ENCODE measurements at regions of chr4 and their contacts with region 1.

Region 1: DNA sequence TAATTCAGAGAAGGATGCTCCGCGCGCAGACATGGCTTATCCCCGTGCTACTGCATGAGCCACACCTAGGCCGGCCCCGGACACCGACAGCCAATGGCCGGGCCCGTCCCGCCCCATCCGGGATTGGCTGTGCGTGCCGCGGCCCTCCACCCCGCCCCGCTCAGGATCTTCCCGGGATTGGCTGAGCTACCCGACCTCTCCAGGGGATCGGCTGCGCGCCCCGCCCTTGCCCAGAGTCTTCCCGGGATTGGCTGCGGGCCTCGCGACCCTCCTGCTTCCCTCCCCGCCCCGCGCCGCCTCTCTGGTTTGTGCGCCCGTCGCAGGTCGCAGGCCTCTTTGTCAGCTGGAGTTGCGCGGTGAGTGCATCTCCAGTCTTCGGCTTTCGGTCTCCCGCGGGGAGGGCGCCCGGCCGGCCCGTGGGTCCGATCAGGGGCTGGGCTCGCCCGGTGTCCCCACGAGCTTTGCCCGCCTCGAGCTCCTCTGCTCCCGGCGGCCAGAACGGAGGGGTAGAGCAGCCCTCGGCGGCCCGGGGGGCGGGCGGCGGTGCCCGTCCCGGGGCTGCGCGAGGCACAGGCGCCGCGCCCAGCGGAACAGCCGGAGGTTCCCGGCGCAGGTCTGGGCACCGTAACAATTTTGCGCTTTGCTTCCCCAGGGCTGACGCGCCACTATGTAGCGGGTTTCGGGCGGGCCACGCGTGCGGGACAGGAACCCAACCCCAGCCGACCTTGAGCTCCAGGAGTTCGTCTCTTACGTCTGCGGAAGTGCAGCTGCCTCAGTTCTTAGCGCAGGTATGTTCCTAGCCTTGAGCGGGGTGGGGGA is 38.8 kb downstream of the ERVMER34-1 start:
- DNase-seq: peak; percentile 98
- H3K4me3 Mint-ChIP-seq: peak overlapping the region; percentile 95
- H3K27ac Mint-ChIP-seq: peak overlapping the region; percentile 97
- H3K4me1 Mint-ChIP-seq: peaks cover 48% of the 10 kb centered on the region
- H3K27me3 Mint-ChIP-seq: no peaks in the 10 kb centered on the region

Region 2: GRCh38 chr4:51842554-51843308 is 869.6 kb before region 1 on chr4 and contains the start of gene DCUN1D4:
- CTCF ChIA-PET with region 1: no interaction called
- POLR2A ChIA-PET with region 1: interaction called, 3 read pairs
- intact Hi-C with region 1: loop called (anchors 1 kb)
- DNase-seq: peak; percentile 99
- H3K4me3 Mint-ChIP-seq: peak within 1 kb of the TSS; percentile 89
- H3K27ac Mint-ChIP-seq: peak within 1 kb of the TSS; percentile 89
- H3K4me1 Mint-ChIP-seq: peaks cover 18% of the 10 kb centered on the region
- H3K27me3 Mint-ChIP-seq: no peaks in the 10 kb centered on the region
- total RNA-seq, gene DCUN1D4: 23.5 to 25.1 TPM

Region 3: DNA sequence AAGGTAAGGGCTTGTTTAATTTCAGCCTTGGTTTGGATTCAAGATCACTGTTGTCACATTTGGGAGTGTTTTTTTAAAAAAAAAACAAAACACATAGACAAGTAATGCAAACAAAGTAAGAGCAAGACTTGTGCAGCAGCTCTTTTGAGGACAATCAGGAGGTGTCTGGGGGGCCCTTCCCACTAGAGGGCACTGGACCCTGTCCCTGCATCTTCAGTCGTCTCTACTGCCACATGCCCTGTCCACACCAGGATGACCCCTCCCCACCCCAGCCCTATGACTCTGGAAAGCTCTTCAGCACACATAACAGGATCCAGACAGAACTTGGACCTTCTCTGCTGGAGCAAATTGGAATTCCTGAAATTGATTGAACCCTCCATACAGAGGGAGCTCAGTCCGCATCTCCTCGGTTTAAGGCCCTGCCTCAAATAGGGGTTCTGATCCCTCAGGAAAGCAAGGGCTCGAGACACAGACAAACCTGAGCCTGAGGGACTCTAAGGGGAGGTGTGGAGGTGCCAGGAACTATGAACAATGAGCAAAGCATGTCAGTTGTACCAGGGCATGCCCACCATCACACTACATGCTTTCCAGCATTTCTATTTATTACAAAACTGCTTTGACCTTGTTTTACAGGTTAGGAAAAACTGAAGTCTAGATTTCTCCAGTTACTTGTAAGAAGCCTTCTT is 124.1 kb before region 1 on chr4:
- CTCF ChIA-PET with region 1: interaction called, 18 read pairs
- POLR2A ChIA-PET with region 1: interaction called, 5 read pairs
- intact Hi-C with region 1: loop called (anchors 2 kb)
- DNase-seq: peak; percentile 51
- H3K4me3 Mint-ChIP-seq: no peak overlapping the region
- H3K27ac Mint-ChIP-seq: peak overlapping the region; percentile 44
- H3K4me1 Mint-ChIP-seq: peaks cover 31% of the 10 kb centered on the region
- H3K27me3 Mint-ChIP-seq: no peaks in the 10 kb centered on the region

Region 4: DNA sequence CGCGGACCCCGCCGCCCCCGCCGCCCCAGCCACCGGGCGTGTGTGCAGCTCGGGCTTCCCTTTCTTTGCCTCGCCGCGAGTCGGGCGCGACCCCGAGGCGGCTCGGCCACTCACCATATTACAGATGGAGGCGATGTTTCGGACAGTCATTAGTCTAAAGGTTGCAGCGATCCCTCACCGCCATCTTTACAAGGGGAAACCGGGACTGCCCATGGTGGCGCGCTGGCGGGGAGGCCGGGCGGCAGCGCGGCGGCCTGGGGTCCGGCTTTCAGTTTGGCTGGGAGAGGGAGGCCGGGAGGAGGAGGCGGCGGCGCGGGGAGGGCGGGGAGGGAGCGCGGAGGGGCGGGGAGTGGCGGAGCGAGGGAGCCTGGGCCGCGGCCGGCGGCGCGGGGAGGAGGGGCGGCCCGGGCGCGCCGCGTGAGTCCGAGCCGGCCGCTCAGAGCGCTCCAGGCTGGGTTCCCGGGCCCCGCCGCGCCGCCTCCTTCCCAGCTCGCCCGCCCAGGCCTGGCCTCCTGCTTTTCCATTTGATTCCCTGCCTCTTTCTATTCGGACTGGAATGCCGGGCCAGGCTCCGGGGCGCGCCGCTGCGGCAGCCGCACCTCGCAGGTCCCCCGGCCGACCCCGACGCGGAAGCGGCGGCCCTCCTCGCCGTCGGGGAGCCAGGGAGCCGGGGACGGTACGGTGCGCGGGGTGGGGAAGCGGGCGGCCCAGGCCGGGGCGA is 53.2 kb before region 1 on chr4 and contains the start of gene USP46:
- CTCF ChIA-PET with region 1: interaction called, 7 read pairs
- POLR2A ChIA-PET with region 1: interaction called, 19 read pairs
- intact Hi-C with region 1: loop called (anchors 1 kb)
- DNase-seq: peak; percentile 68
- H3K4me3 Mint-ChIP-seq: peak within 1 kb of the TSS; percentile 84
- H3K27ac Mint-ChIP-seq: peak within 1 kb of the TSS; percentile 79
- H3K4me1 Mint-ChIP-seq: peaks cover 40% of the 10 kb centered on the region
- H3K27me3 Mint-ChIP-seq: peaks cover 2% of the 10 kb centered on the region
- total RNA-seq, gene USP46: 6.2 to 7.0 TPM

Region 5: GRCh38 chr4:52861879-52862616 is 149.7 kb after region 1 on chr4 and contains the start of gene RASL11B:
- CTCF ChIA-PET with region 1: no interaction called
- POLR2A ChIA-PET with region 1: no interaction called
- intact Hi-C with region 1: loop called (anchors 5 kb)
- DNase-seq: peak; percentile 88
- H3K4me3 Mint-ChIP-seq: peak within 1 kb of the TSS; percentile 64
- H3K27ac Mint-ChIP-seq: no peak within 1 kb of the TSS
- H3K4me1 Mint-ChIP-seq: peaks cover 5% of the 10 kb centered on the region
- H3K27me3 Mint-ChIP-seq: peaks cover 36% of the 10 kb centered on the region
- total RNA-seq, gene RASL11B: 0.29 to 0.40 TPM

Region 6: DNA sequence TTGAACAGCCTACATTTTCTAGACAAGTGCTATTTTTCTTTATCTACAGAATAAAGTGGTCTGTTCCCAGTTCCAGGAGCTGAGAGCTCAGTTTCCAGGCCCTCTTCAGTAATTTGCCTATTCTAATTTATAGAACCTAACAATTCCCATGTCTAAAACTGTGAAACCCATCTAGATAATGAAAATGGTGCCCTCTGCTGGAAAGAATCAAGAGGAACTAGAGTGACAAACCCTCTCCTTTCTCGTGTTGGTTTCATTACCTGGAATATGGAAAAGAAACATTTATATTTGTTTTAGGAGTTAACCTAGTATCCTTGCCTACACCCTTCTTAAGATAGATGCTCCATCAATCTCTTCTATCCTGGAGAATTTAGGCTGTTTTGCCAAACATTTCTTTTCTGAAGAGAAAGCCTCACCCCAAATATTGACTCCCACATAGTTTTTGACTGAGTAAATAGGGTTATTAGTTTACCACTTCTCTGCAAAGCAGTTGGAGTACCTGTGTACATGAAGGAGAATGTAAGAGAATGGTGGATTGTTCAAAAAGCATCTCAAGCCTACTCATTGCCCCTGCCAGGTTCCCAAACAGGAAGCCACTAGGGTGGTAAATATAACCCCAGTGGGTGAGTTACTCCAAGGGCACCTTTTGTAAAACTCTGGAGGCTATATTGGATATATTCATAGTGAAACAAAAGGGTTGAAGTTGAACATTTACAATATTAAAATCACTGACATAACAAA is 271.4 kb after region 1 on chr4:
- CTCF ChIA-PET with region 1: interaction called, 11 read pairs
- POLR2A ChIA-PET with region 1: interaction called, 4 read pairs
- intact Hi-C with region 1: loop called (anchors 2 kb)
- DNase-seq: no peak
- H3K4me3 Mint-ChIP-seq: no peak overlapping the region
- H3K27ac Mint-ChIP-seq: no peak overlapping the region
- H3K4me1 Mint-ChIP-seq: peaks cover 4% of the 10 kb centered on the region
- H3K27me3 Mint-ChIP-seq: no peaks in the 10 kb centered on the region

Region 7: GRCh38 chr4:53185869-53186585 is 473.6 kb after region 1 on chr4:
- CTCF ChIA-PET with region 1: no interaction called
- POLR2A ChIA-PET with region 1: no interaction called
- intact Hi-C with region 1: no loop called
- DNase-seq: no peak
- H3K4me3 Mint-ChIP-seq: no peak overlapping the region
- H3K27ac Mint-ChIP-seq: no peak overlapping the region
- H3K4me1 Mint-ChIP-seq: no peaks in the 10 kb centered on the region
- H3K27me3 Mint-ChIP-seq: no peaks in the 10 kb centered on the region

Region 8: GRCh38 chr4:53365486-53366300 is 653.3 kb after region 1 on chr4 and contains the start of gene SCFD2:
- CTCF ChIA-PET with region 1: no interaction called
- POLR2A ChIA-PET with region 1: no interaction called
- intact Hi-C with region 1: loop called (anchors 1 kb)
- DNase-seq: peak; percentile 99
- H3K4me3 Mint-ChIP-seq: peak within 1 kb of the TSS; percentile 96
- H3K27ac Mint-ChIP-seq: peak within 1 kb of the TSS; percentile 94
- H3K4me1 Mint-ChIP-seq: peaks cover 39% of the 10 kb centered on the region
- H3K27me3 Mint-ChIP-seq: peaks cover 5% of the 10 kb centered on the region
- total RNA-seq, gene SCFD2: 18.8 to 19.9 TPM